ENCODE measurements at regions of chr12 and their contacts with region 1.

Region 1: DNA sequence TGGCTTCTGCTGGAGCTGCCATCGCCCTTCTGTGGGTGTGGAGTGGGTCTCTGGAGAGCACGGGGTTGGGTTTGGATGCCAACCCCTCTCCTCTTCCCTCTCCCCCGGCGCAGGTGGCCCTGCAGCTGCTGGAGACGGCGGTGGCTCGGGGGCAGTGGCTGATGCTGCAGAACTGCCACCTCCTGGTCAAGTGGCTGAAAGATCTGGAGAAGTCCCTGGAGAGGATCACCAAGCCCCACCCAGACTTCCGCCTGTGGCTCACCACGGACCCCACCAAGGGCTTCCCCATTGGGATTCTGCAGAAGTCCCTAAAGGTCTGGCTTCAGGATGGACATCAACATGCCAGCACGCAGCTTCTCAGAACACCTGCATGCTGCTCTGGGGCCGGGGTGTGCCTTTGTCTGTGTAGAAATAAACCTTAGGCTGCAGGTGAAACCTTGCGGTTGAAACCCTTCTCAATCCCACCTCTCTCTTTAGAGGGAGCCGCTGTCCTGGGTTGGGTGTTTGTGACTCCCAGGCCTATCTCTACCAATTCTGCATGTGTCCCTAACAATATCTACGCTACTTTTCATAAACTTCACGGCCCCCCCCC is 44.3 kb downstream of the CCDC92 start:
- DNase-seq: peak in 3 of 4 experiments; percentile 28 to 46 (median 28)
- ATAC-seq: peak; percentile 85
- H3K4me3 ChIP-seq: no peak overlapping the region
- H3K27ac ChIP-seq: no peak overlapping the region
- H3K4me1 ChIP-seq: peaks cover 0 to 4% of the 10 kb centered on the region in 2 experiments; a peak in 2 of 5 replicates
- H3K27me3 ChIP-seq: peaks cover 53 to 90% of the 10 kb centered on the region in 2 experiments
- CTCF ChIP-seq: peak; percentile 32 to 47 (median 41); a peak in 4 of 6 replicates
- EP300 ChIP-seq: no peak
- POLR2A ChIP-seq: no peak
- RAD21 ChIP-seq: peak; percentile 29 to 53

Region 2: DNA sequence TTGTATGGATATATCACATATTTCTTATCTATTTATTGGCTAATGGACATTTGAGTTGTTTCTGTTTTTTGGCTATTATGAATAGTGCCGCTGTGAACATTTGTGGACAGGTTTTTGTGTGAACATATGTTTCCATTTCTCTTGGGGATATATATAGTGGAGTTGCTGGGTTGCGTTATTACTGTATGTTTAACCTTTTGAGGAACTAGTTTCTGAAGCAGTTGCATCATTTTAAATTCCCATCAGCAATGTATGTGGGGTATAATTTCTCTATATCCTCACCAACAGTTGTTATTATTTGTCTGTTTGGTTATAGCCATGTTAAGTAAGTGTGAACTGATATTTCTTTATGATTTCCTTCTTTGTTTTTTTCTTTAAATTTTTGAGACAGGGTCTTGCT is 246.8 kb before region 1 on chr12:
- CTCF ChIA-PET with region 1: no interaction called
- POLR2A ChIA-PET with region 1: no interaction called
- in situ Hi-C with region 1: no loop called
- intact Hi-C with region 1: no loop called
- DNase-seq: no peak
- ATAC-seq: no peak
- H3K4me3 ChIP-seq: no peak overlapping the region
- H3K27ac ChIP-seq: no peak overlapping the region
- H3K4me1 ChIP-seq: no peaks in the 10 kb centered on the region; a peak in 1 of 5 replicates
- H3K27me3 ChIP-seq: no peaks in the 10 kb centered on the region
- CTCF ChIP-seq: no peak
- EP300 ChIP-seq: no peak
- POLR2A ChIP-seq: no peak
- RAD21 ChIP-seq: no peak

Region 3: GRCh38 chr12:123705935-123706334 is 222.4 kb before region 1 on chr12:
- CTCF ChIA-PET with region 1: no interaction called
- POLR2A ChIA-PET with region 1: no interaction called
- in situ Hi-C with region 1: no loop called
- intact Hi-C with region 1: no loop called
- DNase-seq: peak in 2 of 4 experiments; percentile 38 to 53
- ATAC-seq: peak; percentile 88
- H3K4me3 ChIP-seq: no peak overlapping the region
- H3K27ac ChIP-seq: no peak overlapping the region
- H3K4me1 ChIP-seq: peaks cover 0 to under 1% of the 10 kb centered on the region in 2 experiments; a peak in 2 of 5 replicates
- H3K27me3 ChIP-seq: no peaks in the 10 kb centered on the region
- CTCF ChIP-seq: no peak
- EP300 ChIP-seq: no peak
- POLR2A ChIP-seq: no peak
- RAD21 ChIP-seq: no peak

Region 4: DNA sequence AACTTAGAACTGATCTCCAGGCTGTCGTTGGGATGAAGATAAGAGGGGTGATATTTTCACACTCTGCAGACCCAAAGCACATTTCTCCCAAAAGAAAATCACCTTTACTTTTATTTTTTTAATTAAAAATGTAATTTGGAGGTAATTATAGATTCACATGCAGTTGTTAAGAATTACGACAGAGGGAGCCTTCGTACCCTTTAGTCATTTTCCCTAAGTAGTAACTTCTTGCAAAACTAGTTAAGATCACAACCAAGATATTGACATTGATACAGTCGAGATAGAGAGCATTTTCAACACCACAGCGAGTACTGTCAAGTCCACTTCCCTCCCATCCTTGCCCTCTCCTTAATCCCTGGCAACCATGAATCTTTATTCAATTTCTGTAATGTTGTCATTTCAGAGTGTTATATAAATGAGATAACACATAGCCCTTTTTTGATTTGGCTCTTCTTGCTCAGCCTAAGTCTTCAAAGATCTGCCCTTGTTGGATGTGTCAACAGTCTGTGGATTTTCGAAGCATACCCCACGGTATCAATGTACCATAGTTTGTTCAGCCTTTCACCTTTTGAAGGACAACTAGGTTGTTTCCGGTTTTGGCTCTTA is 126.7 kb before region 1 on chr12:
- CTCF ChIA-PET with region 1: no interaction called
- POLR2A ChIA-PET with region 1: no interaction called
- in situ Hi-C with region 1: no loop called
- intact Hi-C with region 1: loop called (anchors 5 kb)
- DNase-seq: peak in 1 of 4 experiments; percentile 31
- ATAC-seq: no peak
- H3K4me3 ChIP-seq: no peak overlapping the region
- H3K27ac ChIP-seq: no peak overlapping the region
- H3K4me1 ChIP-seq: no peaks in the 10 kb centered on the region; a peak in 1 of 5 replicates
- H3K27me3 ChIP-seq: peaks cover 11 to 20% of the 10 kb centered on the region in 2 experiments
- CTCF ChIP-seq: peak; percentile 35 to 73 (median 52); a peak in 4 of 6 replicates
- EP300 ChIP-seq: no peak
- POLR2A ChIP-seq: no peak
- RAD21 ChIP-seq: peak; percentile 50 to 77